Posterior vena cava (tissue), 2 donors: ENCODE measurements at regions of chr19 and their contacts with region 1.

Region 1: DNA sequence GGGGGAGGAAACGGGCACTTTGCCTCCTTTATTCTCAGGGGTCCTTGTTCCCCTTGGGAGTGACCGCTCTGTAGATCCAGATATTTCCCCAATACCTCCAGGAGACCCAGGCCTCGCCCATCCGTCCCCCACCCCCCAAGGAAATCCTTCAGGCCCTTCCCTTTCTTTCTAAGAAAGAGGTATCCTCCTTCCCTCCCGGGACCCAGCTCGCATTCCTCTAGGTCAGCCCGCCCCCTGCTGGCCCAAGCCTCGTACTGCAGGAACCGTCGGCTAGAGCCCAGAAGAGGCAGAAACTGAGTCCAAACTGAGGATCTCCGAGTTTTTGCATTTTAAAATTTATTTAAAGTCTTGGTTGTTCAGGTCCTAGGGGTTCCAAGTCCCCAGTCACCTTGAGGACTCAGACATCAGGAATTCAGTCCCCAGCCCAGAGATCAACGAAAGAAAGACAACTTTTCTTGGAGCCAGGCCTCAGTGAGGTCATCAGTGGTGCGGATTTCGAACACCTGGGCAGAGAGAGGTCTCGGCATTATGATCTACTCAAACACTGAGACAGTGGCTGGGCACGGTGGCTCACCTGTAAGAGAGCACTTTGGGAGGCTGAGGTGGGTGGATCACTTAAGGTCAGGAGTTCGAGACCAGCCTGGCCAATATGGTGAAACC is 7.5 kb upstream of the LRFN1 start:
- DNase-seq: peak; percentile 96

Region 2: DNA sequence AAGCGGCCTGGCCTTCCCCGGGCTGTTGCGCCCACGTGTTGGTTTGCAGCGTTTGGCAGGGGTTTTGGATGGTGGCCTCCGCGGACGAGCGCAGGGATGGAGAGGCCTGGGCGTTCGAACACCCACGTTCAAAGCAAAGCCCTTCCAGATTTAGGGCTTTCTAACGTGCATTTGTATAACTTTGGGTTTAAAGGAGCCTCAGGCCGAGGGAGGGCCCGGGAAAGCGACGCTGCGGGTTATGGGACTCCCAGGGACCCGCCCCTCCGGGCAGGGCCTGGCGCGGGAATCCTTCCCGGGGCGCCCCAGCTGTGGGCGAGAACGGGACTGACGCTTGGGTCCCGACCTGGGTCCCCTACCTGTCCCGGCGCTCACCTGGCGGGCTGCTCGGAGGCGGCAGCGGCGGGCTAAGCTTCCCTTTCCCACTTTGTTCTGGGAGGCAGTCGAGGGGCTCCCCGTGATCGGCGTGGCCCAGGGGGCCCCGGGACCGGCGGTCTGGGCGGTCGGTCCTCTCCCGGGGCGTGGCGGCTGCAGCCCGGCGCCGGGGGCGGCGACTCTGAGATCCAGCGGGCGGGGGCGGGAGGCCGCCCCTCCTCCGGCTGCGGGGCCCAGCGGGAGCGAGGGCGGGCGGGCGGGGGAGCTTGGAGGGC is 352.8 kb before region 1 on chr19 and contains the start of gene FBXO17:
- intact Hi-C with region 1: loop called in 1 of 2 experiments (anchors 10 kb)
- DNase-seq: peak; percentile 90
- total RNA-seq, gene FBXO17: 17.4 to 23.0 TPM